Panc1 (cell line): ENCODE measurements at regions of chr5 and their contacts with region 1.

Region 1: DNA sequence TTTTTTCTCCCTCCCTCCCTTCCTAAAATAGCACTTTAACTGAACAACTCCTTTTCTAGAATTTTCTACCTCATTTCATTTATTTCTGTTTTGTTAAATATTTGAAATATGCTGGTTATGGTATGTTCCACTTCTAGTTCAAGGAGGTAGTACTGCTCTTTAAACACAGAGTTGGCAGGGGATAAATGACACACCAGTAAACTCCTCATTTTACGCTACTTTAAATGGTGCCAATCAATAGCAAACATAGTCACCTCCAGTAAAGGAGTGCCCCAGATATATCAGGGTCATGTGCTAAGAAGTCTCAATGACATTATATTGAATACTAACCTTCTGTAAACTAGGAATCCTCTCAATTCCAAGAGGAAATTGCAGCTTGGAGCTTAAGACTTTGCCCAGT is 56.9 kb downstream of the MYO10 start:
- DNase-seq: no peak
- ATAC-seq: no peak
- H3K4me3 ChIP-seq: no peak overlapping the region
- H3K27ac ChIP-seq: peak overlapping the region; percentile 65
- H3K4me1 ChIP-seq: peaks cover 48% of the 10 kb centered on the region
- H3K27me3 ChIP-seq: no peaks in the 10 kb centered on the region
- CTCF ChIP-seq: no peak

Region 2: DNA sequence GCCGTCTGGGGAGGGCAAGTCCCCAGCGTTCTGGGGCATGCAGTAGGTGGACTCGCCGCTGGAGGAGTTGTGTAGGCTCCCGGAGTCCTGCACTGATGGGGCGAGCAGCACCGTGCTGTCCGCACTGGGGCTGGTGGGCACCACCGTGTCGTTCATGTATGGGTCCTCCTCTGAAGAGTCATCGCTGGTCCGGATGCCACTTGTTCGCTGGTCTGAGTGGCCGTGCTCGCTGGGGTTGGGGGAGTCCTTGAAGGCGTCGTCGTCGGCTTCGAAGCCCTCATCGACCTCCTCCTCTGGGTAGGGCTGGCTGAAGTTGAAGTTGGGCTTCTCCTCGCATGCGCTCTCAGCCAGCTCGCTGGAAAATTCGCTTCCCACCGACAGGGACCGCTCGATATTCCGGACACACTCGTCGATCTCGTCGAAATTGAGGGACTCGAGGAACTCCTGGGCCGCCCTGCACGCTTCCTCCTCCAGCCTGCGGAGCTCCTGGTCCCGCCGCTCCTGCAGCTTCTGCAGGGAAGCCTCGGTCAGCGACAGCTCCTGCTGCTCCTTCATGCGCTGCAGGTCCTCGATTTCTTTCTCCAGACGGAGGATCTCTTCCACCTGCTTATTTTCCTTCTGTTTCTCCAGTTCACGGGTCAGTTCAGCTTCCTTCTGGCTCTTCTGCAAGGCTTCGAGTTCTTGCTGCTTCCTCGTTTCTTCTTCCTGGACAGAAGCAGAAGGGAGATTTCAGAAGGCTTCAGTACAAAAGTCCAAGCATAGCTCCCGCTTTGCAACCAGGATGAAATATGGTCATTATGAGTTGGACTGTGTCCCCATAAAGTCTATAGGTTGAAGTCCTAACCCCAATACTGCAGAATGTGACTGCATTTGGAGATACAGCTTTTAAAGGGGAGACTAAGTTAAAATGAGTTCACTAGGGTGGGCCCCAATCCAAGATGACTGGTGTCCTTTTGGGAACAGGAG is 177.8 kb before region 1 on chr5:
- CTCF ChIA-PET with region 1: no interaction called
- POLR2A ChIA-PET with region 1: no interaction called
- in situ Hi-C with region 1: no loop called
- intact Hi-C with region 1: no loop called
- DNase-seq: no peak
- ATAC-seq: no peak; the same call in 1 of the 2 replicates
- H3K4me3 ChIP-seq: no peak overlapping the region
- H3K27ac ChIP-seq: no peak overlapping the region
- H3K4me1 ChIP-seq: no peaks in the 10 kb centered on the region
- H3K27me3 ChIP-seq: no peaks in the 10 kb centered on the region
- CTCF ChIP-seq: no peak

Region 3: GRCh38 chr5:16866795-16867236 is 12.4 kb before region 1 on chr5:
- CTCF ChIA-PET with region 1: interaction called, 5 read pairs
- POLR2A ChIA-PET with region 1: interaction called, 16 read pairs
- in situ Hi-C with region 1: no loop called
- intact Hi-C with region 1: no loop called
- DNase-seq: no peak
- ATAC-seq: peak; percentile 88
- H3K4me3 ChIP-seq: peak overlapping the region in 1 of 2 experiments; percentile 12; a peak in 2 of 4 replicates
- H3K27ac ChIP-seq: peak overlapping the region; percentile 91
- H3K4me1 ChIP-seq: peaks cover 87% of the 10 kb centered on the region
- H3K27me3 ChIP-seq: no peaks in the 10 kb centered on the region
- CTCF ChIP-seq: no peak